A673 (cell line): ENCODE measurements at regions of chr4 and their contacts with region 1.

Region 1: DNA sequence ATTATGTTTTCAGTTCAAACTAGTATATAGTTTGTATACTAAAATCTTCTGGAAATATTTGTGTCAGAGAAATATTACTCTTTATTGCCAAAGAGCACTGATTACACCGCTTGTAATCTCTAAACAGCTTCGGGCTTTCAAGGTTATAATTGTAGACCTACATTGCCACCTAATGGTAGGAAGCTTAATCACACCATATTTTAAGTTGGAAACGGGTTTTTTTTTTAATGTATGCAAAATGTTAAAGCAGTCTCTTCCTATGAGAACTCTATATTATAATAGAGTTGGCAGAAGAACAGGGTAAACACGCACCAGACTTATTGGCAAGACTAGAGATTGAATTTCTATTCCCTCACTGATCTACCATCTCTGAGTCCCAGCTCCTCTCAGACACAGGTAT is 19.5 kb upstream of the NFXL1 start:
- DNase-seq: peak; percentile 76
- H3K4me3 ChIP-seq: no peak overlapping the region
- H3K27ac ChIP-seq: no peak overlapping the region
- H3K4me1 ChIP-seq: peaks cover 11% of the 10 kb centered on the region
- H3K27me3 ChIP-seq: peaks cover 4% of the 10 kb centered on the region
- CTCF ChIP-seq: peak; percentile 71

Region 2: DNA sequence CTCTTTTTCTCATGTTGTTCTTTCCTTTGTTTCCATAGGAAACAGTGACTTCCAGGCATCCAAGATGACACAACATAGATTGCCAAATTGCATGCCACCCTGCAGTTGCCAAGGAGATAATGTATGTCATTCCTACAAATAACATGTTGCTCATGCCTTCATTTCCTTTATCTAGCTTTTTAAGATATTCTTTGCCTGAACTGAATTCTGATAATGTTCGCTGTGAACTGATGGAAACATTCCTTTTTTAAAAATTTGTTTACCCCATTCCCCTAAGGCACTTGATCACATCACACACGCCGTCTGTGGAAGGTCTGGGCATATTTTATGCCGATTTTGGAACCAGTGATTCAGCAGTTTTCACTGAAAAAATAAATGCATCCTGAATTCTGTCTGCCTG is 986.8 kb before region 1 on chr4:
- CTCF ChIA-PET with region 1: no interaction called
- POLR2A ChIA-PET with region 1: no interaction called
- intact Hi-C with region 1: loop called (anchors 10 kb)
- DNase-seq: no peak
- H3K4me3 ChIP-seq: peak overlapping the region; percentile 9
- H3K27ac ChIP-seq: peak overlapping the region; percentile 80
- H3K4me1 ChIP-seq: peaks cover 53% of the 10 kb centered on the region
- H3K27me3 ChIP-seq: no peaks in the 10 kb centered on the region
- CTCF ChIP-seq: no peak

Region 3: DNA sequence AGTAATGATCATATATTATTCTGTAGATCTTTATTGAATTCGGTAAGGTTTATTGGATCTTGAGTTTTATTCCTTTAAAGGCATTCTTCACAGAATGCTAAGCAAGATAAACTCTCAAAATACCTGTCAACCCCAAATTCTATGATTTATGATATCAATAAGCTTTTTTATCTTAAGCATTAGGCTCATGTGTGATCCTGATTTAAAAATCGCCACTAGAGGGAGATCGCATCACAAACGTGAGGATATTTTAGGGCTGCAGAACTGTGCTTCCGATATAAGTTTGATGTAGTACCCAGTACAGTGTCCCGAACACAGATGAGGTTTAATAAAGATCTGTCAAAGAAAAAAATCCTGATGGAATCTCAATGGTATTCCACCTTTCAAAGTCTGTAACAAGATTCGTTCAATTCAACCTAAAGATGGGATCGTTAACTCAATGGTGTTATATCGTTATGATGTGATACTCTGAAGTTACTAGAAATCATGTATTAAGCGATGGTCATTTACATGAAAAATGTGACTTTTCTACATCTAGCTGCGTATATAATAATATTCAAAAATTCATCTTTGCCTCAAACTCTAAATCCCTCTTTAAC is 264.9 kb before region 1 on chr4:
- CTCF ChIA-PET with region 1: interaction called, 4 read pairs
- POLR2A ChIA-PET with region 1: interaction called, 3 read pairs
- intact Hi-C with region 1: loop called (anchors 2 kb)
- DNase-seq: peak; percentile 68
- H3K4me3 ChIP-seq: no peak overlapping the region
- H3K27ac ChIP-seq: no peak overlapping the region
- H3K4me1 ChIP-seq: no peaks in the 10 kb centered on the region
- H3K27me3 ChIP-seq: no peaks in the 10 kb centered on the region
- CTCF ChIP-seq: peak; percentile 86

Region 4: GRCh38 chr4:47686294-47686872 is 247.5 kb before region 1 on chr4:
- CTCF ChIA-PET with region 1: no interaction called
- POLR2A ChIA-PET with region 1: no interaction called
- intact Hi-C with region 1: loop called (anchors 5 kb)
- DNase-seq: peak; percentile 63
- H3K4me3 ChIP-seq: no peak overlapping the region
- H3K27ac ChIP-seq: no peak overlapping the region
- H3K4me1 ChIP-seq: no peaks in the 10 kb centered on the region
- H3K27me3 ChIP-seq: no peaks in the 10 kb centered on the region
- CTCF ChIP-seq: peak; percentile 87

Region 5: DNA sequence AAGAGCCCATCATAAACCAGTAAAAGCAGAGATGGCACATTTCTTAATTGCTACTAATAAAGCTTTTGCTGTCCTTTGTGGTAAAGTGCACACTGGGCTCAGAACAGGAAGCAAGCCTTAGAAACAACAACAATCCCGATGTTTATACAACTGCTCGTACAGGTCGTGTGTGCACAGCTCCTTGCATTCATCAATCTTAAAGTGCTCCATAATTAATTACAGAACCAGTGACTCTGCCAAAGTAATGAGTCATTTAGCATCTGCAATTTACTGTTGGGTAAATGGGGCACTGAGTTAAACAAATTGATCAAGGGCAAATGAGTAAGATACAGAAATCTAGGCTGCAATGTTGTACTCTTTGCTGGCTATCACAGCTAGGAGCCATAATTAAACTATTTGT is 261.5 kb after region 1 on chr4:
- CTCF ChIA-PET with region 1: no interaction called
- POLR2A ChIA-PET with region 1: no interaction called
- intact Hi-C with region 1: no loop called
- DNase-seq: peak; percentile 45
- H3K4me3 ChIP-seq: no peak overlapping the region
- H3K27ac ChIP-seq: no peak overlapping the region
- H3K4me1 ChIP-seq: peaks cover 4% of the 10 kb centered on the region
- H3K27me3 ChIP-seq: no peaks in the 10 kb centered on the region
- CTCF ChIP-seq: no peak